ENCODE measurements at regions of chr7 and their contacts with region 1.

Region 1: GRCh38 chr7:128462460-128462859 is 6.8 kb downstream of the HILPDA start:
- DNase-seq: no peak
- ATAC-seq: no peak
- H3K4me3 ChIP-seq: no peak overlapping the region
- H3K4me3 Mint-ChIP-seq: no peak overlapping the region
- H3K27ac ChIP-seq: no peak overlapping the region
- H3K27ac Mint-ChIP-seq: no peak overlapping the region
- H3K4me1 ChIP-seq: peaks cover 8% of the 10 kb centered on the region
- H3K4me1 Mint-ChIP-seq: peaks cover 8% of the 10 kb centered on the region
- H3K27me3 ChIP-seq: no peaks in the 10 kb centered on the region
- H3K27me3 Mint-ChIP-seq: no peaks in the 10 kb centered on the region
- CTCF ChIP-seq: no peak

Region 2: DNA sequence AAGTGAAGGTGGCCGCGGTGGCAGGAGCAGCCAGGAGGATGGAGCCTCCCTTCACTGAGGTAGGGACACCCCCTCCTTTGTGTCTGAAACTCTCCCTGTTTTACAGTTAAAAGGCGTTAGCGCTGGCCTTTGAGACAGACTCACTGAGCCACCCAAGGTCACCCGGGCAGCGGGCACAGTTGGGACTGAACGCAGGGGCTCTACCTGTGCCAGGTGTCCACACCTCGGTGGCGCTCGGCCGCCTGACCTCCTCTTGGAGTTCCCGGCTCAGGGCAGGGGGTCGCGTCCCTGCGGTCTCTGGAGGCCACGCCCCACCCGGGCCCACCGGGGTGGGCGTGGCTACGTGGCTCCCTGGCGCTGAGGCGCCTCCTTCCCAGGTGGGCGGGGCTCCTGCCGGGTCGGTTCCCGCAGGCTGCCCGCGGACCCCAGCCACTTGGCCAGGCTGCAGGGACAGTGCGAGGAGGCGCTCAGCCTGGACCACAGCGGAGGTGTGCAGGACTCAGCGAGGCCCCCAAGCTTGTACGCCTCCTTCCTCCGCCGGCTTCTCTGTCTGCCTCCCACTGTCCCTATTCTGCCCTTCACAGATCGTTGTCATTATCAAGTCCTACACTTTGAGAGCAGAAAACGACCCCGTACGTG is 261.3 kb before region 1 on chr7:
- CTCF ChIA-PET with region 1: no interaction called
- POLR2A ChIA-PET with region 1: no interaction called
- intact Hi-C with region 1: no loop called
- DNase-seq: no peak
- ATAC-seq: peak; percentile 29
- H3K4me3 ChIP-seq: peak overlapping the region; percentile 29
- H3K4me3 Mint-ChIP-seq: peak overlapping the region; percentile 80
- H3K27ac ChIP-seq: no peak overlapping the region
- H3K27ac Mint-ChIP-seq: no peak overlapping the region
- H3K4me1 ChIP-seq: peaks cover 17% of the 10 kb centered on the region
- H3K4me1 Mint-ChIP-seq: peaks cover 19% of the 10 kb centered on the region
- H3K27me3 ChIP-seq: peaks cover 30 to 37% of the 10 kb centered on the region in 2 experiments
- H3K27me3 Mint-ChIP-seq: peaks cover 60% of the 10 kb centered on the region
- CTCF ChIP-seq: no peak

Region 3: DNA sequence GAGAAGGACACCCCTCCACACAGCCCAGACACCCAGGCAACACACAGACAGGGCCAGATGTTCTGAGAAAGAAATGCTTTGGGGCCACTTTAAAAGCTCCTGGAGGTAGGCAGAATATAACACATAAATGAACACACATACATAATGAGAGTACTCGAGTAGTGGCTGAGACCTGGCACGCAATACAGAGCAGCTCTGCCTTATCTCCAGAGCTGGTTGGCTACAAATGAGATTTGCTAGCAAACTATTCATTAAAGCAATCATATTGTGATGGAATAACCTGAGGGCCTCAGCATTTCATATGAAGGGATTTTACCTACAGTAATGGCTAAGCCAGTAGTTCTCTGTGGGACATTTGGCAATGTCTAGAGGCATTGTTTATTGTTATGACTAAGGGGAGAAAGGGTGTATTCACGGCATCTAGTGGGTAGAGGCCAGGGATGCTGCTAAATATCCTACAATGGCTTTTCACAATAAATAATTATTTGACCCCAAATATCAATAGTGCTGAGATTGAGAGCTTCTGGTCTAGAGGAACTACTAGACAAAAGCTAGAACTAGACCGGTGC is 47.2 kb before region 1 on chr7:
- CTCF ChIA-PET with region 1: interaction called, 12 read pairs
- POLR2A ChIA-PET with region 1: interaction called, 4 read pairs
- intact Hi-C with region 1: no loop called
- DNase-seq: no peak
- ATAC-seq: no peak
- H3K4me3 ChIP-seq: no peak overlapping the region
- H3K4me3 Mint-ChIP-seq: no peak overlapping the region
- H3K27ac ChIP-seq: no peak overlapping the region
- H3K27ac Mint-ChIP-seq: no peak overlapping the region
- H3K4me1 ChIP-seq: peaks cover 6% of the 10 kb centered on the region
- H3K4me1 Mint-ChIP-seq: peaks cover 3% of the 10 kb centered on the region
- H3K27me3 ChIP-seq: no peaks in the 10 kb centered on the region
- H3K27me3 Mint-ChIP-seq: no peaks in the 10 kb centered on the region
- CTCF ChIP-seq: no peak